Activated B cell treated with CpG ODN at 0.5 μM for 24 hours (primary cell): ENCODE measurements at regions of chr6 and their contacts with region 1.

Region 1: DNA sequence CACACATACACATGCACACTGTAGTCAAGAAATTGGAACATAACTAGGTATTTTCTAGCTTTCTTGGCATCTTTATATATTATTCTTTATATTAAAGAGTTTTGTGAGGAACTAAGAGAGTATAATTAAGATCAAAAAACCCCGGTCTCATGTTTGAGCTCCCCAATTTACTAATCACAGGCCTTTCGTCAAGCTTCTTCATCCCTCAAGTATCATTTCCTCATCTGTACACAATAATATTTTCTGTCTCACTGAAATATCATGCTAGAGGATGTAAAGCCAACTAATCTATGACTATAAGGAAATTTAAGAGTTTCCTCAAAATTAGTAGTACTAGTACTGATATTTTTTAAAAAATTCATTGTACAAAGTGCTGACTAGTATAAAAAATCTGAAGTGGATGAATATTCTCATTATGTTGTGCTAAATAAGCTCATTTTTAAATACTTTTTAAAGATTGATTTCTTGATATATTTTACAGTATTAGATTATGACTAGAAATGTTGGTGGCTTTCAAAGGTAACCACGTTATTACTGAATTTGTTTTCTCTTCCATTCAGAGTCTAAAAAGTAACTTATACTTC is 28.0 kb downstream of the PEX3 start:
- DNase-seq: no peak
- ATAC-seq: peak; percentile 79
- H3K4me3 Mint-ChIP-seq: no peak overlapping the region
- H3K27ac Mint-ChIP-seq: peak overlapping the region; percentile 76
- H3K4me1 Mint-ChIP-seq: peaks cover 15% of the 10 kb centered on the region
- H3K27me3 Mint-ChIP-seq: no peaks in the 10 kb centered on the region
- CTCF ChIP-seq: no peak

Region 2: DNA sequence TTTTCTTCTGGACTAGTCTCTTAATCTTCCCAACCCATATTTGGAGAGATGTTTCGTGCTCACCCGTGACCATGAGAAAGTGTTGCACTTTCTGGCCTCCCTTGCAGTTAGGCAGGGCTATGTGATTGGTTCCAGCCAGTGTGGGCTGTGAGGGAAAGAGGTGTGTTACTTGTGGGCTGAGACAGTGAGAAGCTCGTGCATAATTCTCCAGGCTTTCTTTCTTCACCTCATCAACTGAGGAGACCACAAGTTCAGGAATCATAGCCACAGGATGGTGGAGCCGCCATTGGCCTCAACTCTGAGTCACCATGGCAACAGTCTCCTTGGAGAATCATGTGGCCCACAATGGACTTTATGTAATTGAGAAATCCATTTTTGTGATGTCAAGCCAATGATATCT is 90.5 kb after region 1 on chr6:
- CTCF ChIA-PET with region 1: no interaction called
- POLR2A ChIA-PET with region 1: interaction called, 3 read pairs
- intact Hi-C with region 1: loop called (anchors 1 kb)
- DNase-seq: no peak
- ATAC-seq: no peak
- H3K4me3 Mint-ChIP-seq: no peak overlapping the region
- H3K27ac Mint-ChIP-seq: no peak overlapping the region
- H3K4me1 Mint-ChIP-seq: peaks cover 14% of the 10 kb centered on the region
- H3K27me3 Mint-ChIP-seq: no peaks in the 10 kb centered on the region
- CTCF ChIP-seq: no peak

Region 3: GRCh38 chr6:143677891-143678791 is 199.6 kb after region 1 on chr6 and contains the start of gene PHACTR2:
- CTCF ChIA-PET with region 1: no interaction called
- POLR2A ChIA-PET with region 1: no interaction called
- intact Hi-C with region 1: loop called (anchors 10 kb)
- DNase-seq: peak; percentile 28
- ATAC-seq: peak; percentile 75
- H3K4me3 Mint-ChIP-seq: peak within 1 kb of the TSS; percentile 81
- H3K27ac Mint-ChIP-seq: no peak within 1 kb of the TSS
- H3K4me1 Mint-ChIP-seq: peaks cover 13% of the 10 kb centered on the region
- H3K27me3 Mint-ChIP-seq: peaks cover 52% of the 10 kb centered on the region
- CTCF ChIP-seq: no peak
- total RNA-seq, gene PHACTR2: 10.5 and 11.7 TPM in 2 replicates

Region 4: GRCh38 chr6:143755301-143755744 is 276.8 kb after region 1 on chr6:
- CTCF ChIA-PET with region 1: no interaction called
- POLR2A ChIA-PET with region 1: no interaction called
- intact Hi-C with region 1: no loop called
- DNase-seq: no peak
- ATAC-seq: no peak
- H3K4me3 Mint-ChIP-seq: no peak overlapping the region
- H3K27ac Mint-ChIP-seq: no peak overlapping the region
- H3K4me1 Mint-ChIP-seq: no peaks in the 10 kb centered on the region
- H3K27me3 Mint-ChIP-seq: no peaks in the 10 kb centered on the region
- CTCF ChIP-seq: no peak